AG04450 (cell line): ENCODE measurements at regions of chr7 and their contacts with region 1.

Region 1: GRCh38 chr7:152395112-152395511 is 40.7 kb downstream of the KMT2C start:
- DNase-seq: peak; percentile 20
- H3K4me3 ChIP-seq: no peak overlapping the region
- H3K27ac ChIP-seq: no peak overlapping the region
- H3K27me3 ChIP-seq: no peaks in the 10 kb centered on the region
- CTCF ChIP-seq: no peak

Region 2: GRCh38 chr7:152406491-152406890 is 11.4 kb after region 1 on chr7:
- CTCF ChIA-PET with region 1: interaction called, 10 read pairs
- POLR2A ChIA-PET with region 1: no interaction called
- DNase-seq: no peak
- H3K4me3 ChIP-seq: no peak overlapping the region
- H3K27ac ChIP-seq: no peak overlapping the region
- H3K27me3 ChIP-seq: no peaks in the 10 kb centered on the region
- CTCF ChIP-seq: no peak

Region 3: GRCh38 chr7:152528612-152529011 is 133.5 kb after region 1 on chr7:
- CTCF ChIA-PET with region 1: no interaction called
- POLR2A ChIA-PET with region 1: no interaction called
- DNase-seq: no peak
- H3K4me3 ChIP-seq: no peak overlapping the region
- H3K27ac ChIP-seq: no peak overlapping the region
- H3K27me3 ChIP-seq: no peaks in the 10 kb centered on the region
- CTCF ChIP-seq: no peak